B cell (primary cell): ENCODE measurements at regions of chr1 and their contacts with region 1.

Region 1: DNA sequence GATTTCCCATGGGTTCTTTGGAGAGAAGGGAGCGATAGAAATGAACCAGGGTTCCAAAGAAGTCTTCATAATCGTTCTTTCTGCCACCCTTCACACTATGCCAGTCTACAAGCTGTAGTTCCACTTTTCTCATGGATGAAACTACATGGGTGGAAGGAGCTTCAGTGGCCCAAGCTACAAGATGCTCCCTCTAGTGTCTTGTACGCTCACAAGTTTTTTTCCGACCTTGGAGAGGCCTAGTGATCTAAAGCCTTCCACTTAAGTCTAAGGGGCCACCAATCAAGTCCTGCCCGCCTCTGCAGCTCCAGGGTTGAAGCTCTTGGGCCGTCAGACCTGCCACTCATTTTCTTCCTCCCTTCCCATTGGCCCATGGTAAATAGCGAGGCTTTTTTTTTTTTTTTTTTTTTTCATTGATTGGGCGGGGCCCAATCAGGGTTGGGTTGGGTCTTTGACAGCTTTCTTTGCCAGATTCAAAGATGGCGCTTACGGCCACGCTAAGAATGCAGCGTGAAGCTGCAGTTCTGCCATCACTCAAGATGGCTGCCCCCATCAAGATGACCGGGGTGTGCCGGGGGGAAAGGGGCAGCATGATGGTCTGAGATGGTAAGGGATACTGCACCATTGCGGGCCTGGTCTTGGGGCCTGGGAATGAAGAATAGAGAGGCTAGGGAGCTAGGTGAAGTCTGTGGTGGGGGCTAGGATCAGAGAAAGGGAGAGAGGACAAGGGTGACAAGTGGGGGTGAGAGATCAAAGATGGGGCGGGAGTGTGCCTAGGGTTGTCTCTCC is at the start of gene TOMM40L:
- DNase-seq: peak; percentile 96
- ATAC-seq: peak; percentile 90
- H3K4me3 ChIP-seq: peak within 1 kb of the TSS; percentile 32 to 93 (median 79)
- H3K4me3 Mint-ChIP-seq: peak within 1 kb of the TSS; percentile 99
- H3K27ac ChIP-seq: peak within 1 kb of the TSS in 1 of 2 donors; percentile 35
- H3K27ac Mint-ChIP-seq: peak within 1 kb of the TSS; percentile 90
- H3K4me1 ChIP-seq: peaks cover 22 to 29% of the 10 kb centered on the region in 2 donors
- H3K4me1 Mint-ChIP-seq: peaks cover 31% of the 10 kb centered on the region
- H3K27me3 ChIP-seq: peaks cover 0 to 32% (median 24%) of the 10 kb centered on the region in 4 experiments
- H3K27me3 Mint-ChIP-seq: peaks cover 27% of the 10 kb centered on the region
- CTCF ChIP-seq: peak; percentile 56
- total RNA-seq, gene TOMM40L: 9.2 and 9.4 TPM in 2 replicates

Region 2: DNA sequence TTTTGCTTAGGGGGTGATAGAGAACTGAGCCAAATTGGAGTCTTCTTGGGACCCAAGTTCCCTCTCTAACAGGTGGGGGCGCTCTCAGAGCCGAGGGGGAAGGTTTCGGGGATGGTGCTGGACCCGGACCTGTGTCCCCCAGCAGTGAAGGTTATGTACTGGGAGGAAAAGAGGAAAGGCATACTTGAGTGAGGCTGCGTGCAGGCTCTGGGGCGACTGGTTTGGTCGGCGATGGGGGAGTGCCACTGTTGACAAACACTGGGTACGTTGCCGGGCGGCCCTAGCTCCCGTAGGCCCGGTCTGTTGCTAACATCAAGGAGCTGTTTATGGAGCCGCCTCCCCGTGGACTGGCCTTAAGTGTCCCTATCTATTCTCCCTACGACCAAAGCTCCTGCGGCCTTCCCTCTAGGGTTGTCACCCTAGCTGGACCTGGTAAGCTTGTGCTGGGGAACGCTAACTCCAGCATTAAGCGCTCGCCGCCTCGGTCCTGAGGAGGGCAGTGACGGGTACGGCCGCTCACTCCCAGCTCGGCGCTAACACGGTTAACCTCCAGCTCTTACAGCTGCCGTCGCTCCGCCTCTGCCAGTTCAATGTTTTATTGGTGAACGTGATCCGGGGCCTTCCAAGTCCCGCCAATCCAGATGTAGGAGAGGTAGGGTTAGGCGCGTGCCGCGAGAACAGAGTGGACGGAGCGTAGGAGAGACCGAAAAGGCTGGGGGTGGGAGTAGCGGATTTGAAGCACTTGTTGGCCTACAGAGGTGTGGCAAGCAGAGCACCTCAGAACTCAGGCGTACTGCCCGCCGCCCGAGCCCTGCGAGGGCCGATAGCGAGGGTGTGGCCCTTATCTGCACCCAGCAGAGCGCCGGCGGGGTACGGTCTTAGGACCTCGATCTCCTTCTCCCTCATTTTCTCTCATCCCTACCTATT is 59.7 kb before region 1 on chr1 and contains the start of gene PPOX:
- CTCF ChIA-PET with region 1: interaction called, 37 read pairs
- POLR2A ChIA-PET with region 1: interaction called, 8 read pairs
- intact Hi-C with region 1: loop called (anchors 1 kb)
- DNase-seq: peak; percentile 95
- ATAC-seq: peak; percentile 94
- H3K4me3 ChIP-seq: peak within 1 kb of the TSS; percentile 48 to 82 (median 69)
- H3K4me3 Mint-ChIP-seq: peak within 1 kb of the TSS; percentile 91
- H3K27ac ChIP-seq: peak within 1 kb of the TSS; percentile 89 to 92
- H3K27ac Mint-ChIP-seq: peak within 1 kb of the TSS; percentile 99
- H3K4me1 ChIP-seq: peaks cover 20 to 26% of the 10 kb centered on the region in 2 donors
- H3K4me1 Mint-ChIP-seq: peaks cover 47% of the 10 kb centered on the region
- H3K27me3 ChIP-seq: no peaks in the 10 kb centered on the region
- H3K27me3 Mint-ChIP-seq: no peaks in the 10 kb centered on the region
- CTCF ChIP-seq: peak; percentile 68
- total RNA-seq, gene PPOX: 61.7 and 65.6 TPM in 2 replicates

Region 3: GRCh38 chr1:161192476-161193465 is 33.0 kb before region 1 on chr1:
- CTCF ChIA-PET with region 1: interaction called, 39 read pairs
- POLR2A ChIA-PET with region 1: no interaction called
- intact Hi-C with region 1: loop called (anchors 5 kb)
- DNase-seq: peak; percentile 83
- ATAC-seq: peak; percentile 91
- H3K4me3 ChIP-seq: no peak overlapping the region
- H3K4me3 Mint-ChIP-seq: no peak overlapping the region
- H3K27ac ChIP-seq: no peak overlapping the region
- H3K27ac Mint-ChIP-seq: peak overlapping the region; percentile 72
- H3K4me1 ChIP-seq: peaks cover 56 to 71% of the 10 kb centered on the region in 2 donors
- H3K4me1 Mint-ChIP-seq: peaks cover 56% of the 10 kb centered on the region
- H3K27me3 ChIP-seq: no peaks in the 10 kb centered on the region
- H3K27me3 Mint-ChIP-seq: no peaks in the 10 kb centered on the region
- CTCF ChIP-seq: peak; percentile 92

Region 4: DNA sequence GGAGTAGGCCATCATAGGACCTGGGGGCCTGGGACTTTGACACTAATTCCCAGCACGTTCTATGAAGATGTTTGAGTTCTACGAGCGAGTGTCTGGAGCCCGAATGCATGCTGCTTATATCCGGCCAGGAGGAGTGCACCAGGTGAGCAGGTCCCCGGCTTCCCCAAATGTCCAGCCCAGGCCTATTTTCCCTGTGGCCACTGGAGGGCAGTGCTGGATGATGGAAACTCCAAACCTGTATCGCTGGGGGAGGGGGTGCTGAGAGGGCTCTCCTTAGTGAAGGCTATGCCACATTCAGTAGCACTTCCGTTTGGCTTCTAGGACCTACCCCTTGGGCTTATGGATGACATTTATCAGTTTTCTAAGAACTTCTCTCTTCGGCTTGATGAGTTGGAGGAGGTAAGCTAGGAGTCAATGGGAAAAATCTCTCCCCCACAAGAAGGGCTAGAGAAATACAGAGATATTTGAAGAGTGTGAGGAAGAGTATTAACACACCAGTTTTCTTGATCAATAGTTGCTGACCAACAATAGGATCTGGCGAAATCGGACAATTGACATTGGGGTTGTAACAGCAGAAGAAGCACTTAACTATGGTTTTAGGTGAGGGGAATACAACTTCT is 15.8 kb before region 1 on chr1:
- CTCF ChIA-PET with region 1: interaction called, 26 read pairs
- POLR2A ChIA-PET with region 1: interaction called, 3 read pairs
- intact Hi-C with region 1: no loop called
- DNase-seq: peak; percentile 81
- ATAC-seq: peak; percentile 99
- H3K4me3 ChIP-seq: no peak overlapping the region
- H3K4me3 Mint-ChIP-seq: no peak overlapping the region
- H3K27ac ChIP-seq: no peak overlapping the region
- H3K27ac Mint-ChIP-seq: no peak overlapping the region
- H3K4me1 ChIP-seq: peaks cover under 1% of the 10 kb centered on the region in 2 donors
- H3K4me1 Mint-ChIP-seq: peaks cover 3% of the 10 kb centered on the region
- H3K27me3 ChIP-seq: peaks cover 0 to under 1% (median under 1%) of the 10 kb centered on the region in 4 experiments
- H3K27me3 Mint-ChIP-seq: peaks cover 4% of the 10 kb centered on the region
- CTCF ChIP-seq: peak; percentile 74

Region 5: DNA sequence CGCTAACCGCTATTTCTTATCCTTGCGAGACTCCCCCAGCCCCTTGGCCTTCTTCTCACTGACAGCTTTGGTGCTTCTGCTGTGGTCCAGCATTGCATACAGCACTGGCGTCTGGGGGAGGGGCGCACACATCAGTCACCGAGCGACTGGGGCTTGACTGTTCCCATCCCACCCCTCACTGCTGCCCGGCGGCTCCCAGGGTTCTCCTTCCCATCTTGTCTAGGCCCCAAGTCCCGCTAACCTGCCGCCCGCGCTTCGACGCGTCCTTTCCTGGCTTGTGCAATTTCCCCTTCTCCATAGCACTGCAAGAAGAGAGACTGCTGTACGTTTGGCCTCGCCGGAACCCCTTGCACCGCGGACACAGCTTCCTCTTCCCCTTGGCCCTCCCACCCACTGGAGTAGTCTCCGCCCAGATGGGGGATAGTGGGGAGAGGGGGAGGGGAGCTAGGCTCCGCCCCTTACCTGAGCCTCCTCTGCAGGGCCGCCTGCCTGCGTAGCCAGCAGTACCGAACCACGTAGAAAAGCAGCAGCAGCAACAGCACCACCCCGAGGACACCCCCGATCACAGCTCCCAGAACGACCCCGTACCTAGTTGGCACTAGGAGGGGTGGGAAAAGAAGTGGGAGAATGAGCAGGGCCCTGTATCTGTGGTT is 80.3 kb after region 1 on chr1:
- CTCF ChIA-PET with region 1: interaction called, 18 read pairs
- POLR2A ChIA-PET with region 1: interaction called, 6 read pairs
- intact Hi-C with region 1: loop called (anchors 2 kb)
- DNase-seq: peak; percentile 93
- ATAC-seq: peak; percentile 89
- H3K4me3 ChIP-seq: peak overlapping the region; percentile 66 to 91 (median 80)
- H3K4me3 Mint-ChIP-seq: peak overlapping the region; percentile 97
- H3K27ac ChIP-seq: peak overlapping the region; percentile 59 to 72
- H3K27ac Mint-ChIP-seq: peak overlapping the region; percentile 93
- H3K4me1 ChIP-seq: peaks cover 26% of the 10 kb centered on the region in 2 donors
- H3K4me1 Mint-ChIP-seq: peaks cover 42% of the 10 kb centered on the region
- H3K27me3 ChIP-seq: no peaks in the 10 kb centered on the region
- H3K27me3 Mint-ChIP-seq: no peaks in the 10 kb centered on the region
- CTCF ChIP-seq: peak; percentile 49

Region 6: GRCh38 chr1:161367684-161368400 is 142.1 kb after region 1 on chr1 and contains the start of gene CFAP126:
- CTCF ChIA-PET with region 1: interaction called, 14 read pairs
- POLR2A ChIA-PET with region 1: no interaction called
- intact Hi-C with region 1: loop called (anchors 1 kb)
- DNase-seq: peak; percentile 91
- ATAC-seq: peak; percentile 100
- H3K4me3 ChIP-seq: no peak within 1 kb of the TSS
- H3K4me3 Mint-ChIP-seq: no peak within 1 kb of the TSS
- H3K27ac ChIP-seq: peak within 1 kb of the TSS; percentile 69 to 91
- H3K27ac Mint-ChIP-seq: peak within 1 kb of the TSS; percentile 32
- H3K4me1 ChIP-seq: peaks cover 7 to 9% of the 10 kb centered on the region in 2 donors
- H3K4me1 Mint-ChIP-seq: peaks cover 8% of the 10 kb centered on the region
- H3K27me3 ChIP-seq: no peaks in the 10 kb centered on the region
- H3K27me3 Mint-ChIP-seq: no peaks in the 10 kb centered on the region
- CTCF ChIP-seq: peak; percentile 48
- total RNA-seq, gene CFAP126: not detected in 2 replicates

Region 7: DNA sequence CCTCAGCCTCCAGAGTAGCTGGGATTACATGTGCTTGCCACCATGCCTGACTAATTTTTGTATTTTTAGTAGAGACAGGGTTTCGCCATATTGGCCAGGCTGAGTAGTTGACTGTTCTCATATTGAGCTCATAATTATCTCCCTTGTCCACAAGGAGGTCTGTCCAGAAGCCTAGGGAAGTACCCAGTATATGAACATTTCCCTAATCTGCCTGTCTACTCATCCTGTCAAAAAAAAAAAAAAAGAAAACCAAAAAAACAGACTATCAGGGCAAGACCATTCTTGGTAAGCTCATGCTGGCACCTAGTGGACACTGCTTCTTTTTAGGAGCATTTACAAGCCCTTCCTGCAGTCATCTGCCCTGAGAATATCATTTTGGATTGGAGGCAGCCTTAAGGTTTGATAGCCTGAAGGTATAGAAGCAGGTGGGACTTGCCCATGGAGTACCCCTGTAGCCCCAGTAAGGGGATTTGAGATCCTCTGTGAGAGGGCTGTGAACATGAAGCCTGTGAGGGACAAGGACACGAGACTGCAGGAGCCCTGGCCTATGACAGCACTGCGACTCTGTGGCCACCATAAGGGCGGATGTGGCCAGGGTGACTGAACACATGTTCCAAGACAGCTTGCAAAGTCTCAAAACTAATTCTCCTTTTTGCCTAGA is 513.0 kb after region 1 on chr1:
- CTCF ChIA-PET with region 1: no interaction called
- POLR2A ChIA-PET with region 1: no interaction called
- intact Hi-C with region 1: loop called (anchors 2 kb)
- DNase-seq: peak; percentile 80
- ATAC-seq: peak; percentile 69
- H3K4me3 ChIP-seq: no peak overlapping the region
- H3K4me3 Mint-ChIP-seq: peak overlapping the region; percentile 74
- H3K27ac ChIP-seq: peak overlapping the region; percentile 74 to 77
- H3K27ac Mint-ChIP-seq: peak overlapping the region; percentile 92
- H3K4me1 ChIP-seq: peaks cover 34 to 35% of the 10 kb centered on the region in 2 donors
- H3K4me1 Mint-ChIP-seq: peaks cover 41% of the 10 kb centered on the region
- H3K27me3 ChIP-seq: no peaks in the 10 kb centered on the region
- H3K27me3 Mint-ChIP-seq: no peaks in the 10 kb centered on the region
- CTCF ChIP-seq: peak; percentile 37

Region 8: DNA sequence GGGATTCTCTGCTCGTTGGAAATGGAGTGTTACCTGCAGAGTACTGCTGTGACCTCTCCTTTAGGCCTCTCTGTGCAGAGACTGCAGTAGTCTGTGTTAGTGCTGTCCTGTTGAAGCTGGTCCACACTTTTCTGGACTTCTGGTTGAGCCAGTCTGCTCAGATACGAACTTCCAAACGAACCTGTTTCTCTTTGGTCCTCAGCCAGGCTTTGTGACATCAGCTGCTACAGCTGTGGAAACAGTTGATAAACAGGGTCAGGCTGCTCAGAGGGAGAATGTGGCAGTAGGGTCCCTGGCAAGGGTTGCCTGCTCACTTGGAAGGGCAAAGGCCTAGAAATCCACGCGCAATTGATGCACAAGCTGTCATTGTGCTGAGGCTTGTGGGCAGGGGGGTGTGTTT is 942.5 kb after region 1 on chr1:
- CTCF ChIA-PET with region 1: no interaction called
- POLR2A ChIA-PET with region 1: no interaction called
- intact Hi-C with region 1: no loop called
- DNase-seq: no peak
- ATAC-seq: no peak
- H3K4me3 ChIP-seq: no peak overlapping the region
- H3K4me3 Mint-ChIP-seq: no peak overlapping the region
- H3K27ac ChIP-seq: no peak overlapping the region
- H3K27ac Mint-ChIP-seq: no peak overlapping the region
- H3K4me1 ChIP-seq: no peaks in the 10 kb centered on the region
- H3K4me1 Mint-ChIP-seq: no peaks in the 10 kb centered on the region
- H3K27me3 ChIP-seq: peaks cover 0 to 11% (median 1%) of the 10 kb centered on the region in 4 experiments
- H3K27me3 Mint-ChIP-seq: peaks cover 30% of the 10 kb centered on the region
- CTCF ChIP-seq: no peak